Naive thymus-derived CD4-positive, alpha-beta T cell (primary cell): ENCODE measurements at regions of chr15 and their contacts with region 1.

Region 1: GRCh38 chr15:58309963-58310928 is 121.5 kb upstream of the LIPC start:
- DNase-seq: no peak
- ATAC-seq: no peak
- H3K4me3 ChIP-seq: no peak overlapping the region
- H3K4me3 Mint-ChIP-seq: peak overlapping the region in 1 of 10 donors; percentile 14
- H3K27ac ChIP-seq: no peak overlapping the region
- H3K27ac Mint-ChIP-seq: peak overlapping the region in 3 of 9 donors; percentile 38 to 63 (median 53)
- H3K4me1 ChIP-seq: peaks cover 12 to 20% of the 10 kb centered on the region in 2 donors
- H3K4me1 Mint-ChIP-seq: peaks cover 26 to 63% (median 39%) of the 10 kb centered on the region in 7 donors
- H3K27me3 ChIP-seq: no peaks in the 10 kb centered on the region
- H3K27me3 Mint-ChIP-seq: no peaks in the 10 kb centered on the region

Region 2: DNA sequence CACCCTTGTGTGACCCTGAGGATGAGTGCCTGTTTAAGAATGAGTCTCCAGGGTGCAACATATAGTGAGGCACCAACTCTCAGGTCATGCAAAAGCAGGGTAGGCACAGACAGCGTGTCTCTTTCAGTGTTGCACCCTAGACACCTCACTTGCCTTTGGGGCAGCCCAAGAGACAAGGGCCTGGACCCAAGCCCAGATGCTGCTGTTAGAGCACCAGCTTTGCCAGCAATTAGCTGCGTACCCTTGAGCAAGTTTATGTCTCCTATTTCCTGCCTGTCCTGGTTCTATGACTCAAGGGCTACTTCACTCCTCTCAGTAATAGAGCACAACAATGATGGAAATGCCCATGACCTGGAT is 49.4 kb before region 1 on chr15:
- CTCF ChIA-PET with region 1: no interaction called
- POLR2A ChIA-PET with region 1: no interaction called
- intact Hi-C with region 1: no loop called
- DNase-seq: no peak
- ATAC-seq: no peak
- H3K4me3 ChIP-seq: no peak overlapping the region
- H3K4me3 Mint-ChIP-seq: no peak overlapping the region
- H3K27ac ChIP-seq: no peak overlapping the region
- H3K27ac Mint-ChIP-seq: no peak overlapping the region
- H3K4me1 ChIP-seq: no peaks in the 10 kb centered on the region
- H3K4me1 Mint-ChIP-seq: peaks cover 0 to 13% (median 9%) of the 10 kb centered on the region in 7 donors
- H3K27me3 ChIP-seq: no peaks in the 10 kb centered on the region
- H3K27me3 Mint-ChIP-seq: peaks cover 0 to 8% (median 0%) of the 10 kb centered on the region in 5 donors

Region 3: GRCh38 chr15:58357521-58358476 is 47.6 kb after region 1 on chr15:
- CTCF ChIA-PET with region 1: interaction called, 3 read pairs
- POLR2A ChIA-PET with region 1: no interaction called
- intact Hi-C with region 1: loop called in 1 of 2 experiments (anchors 5 kb)
- DNase-seq: peak in 8 of 9 donors; percentile 41 to 82 (median 62)
- ATAC-seq: peak; percentile 87
- H3K4me3 ChIP-seq: no peak overlapping the region
- H3K4me3 Mint-ChIP-seq: peak overlapping the region; percentile 42 to 70 (median 56)
- H3K27ac ChIP-seq: peak overlapping the region; percentile 71
- H3K27ac Mint-ChIP-seq: peak overlapping the region; percentile 80 to 94 (median 87)
- H3K4me1 ChIP-seq: peaks cover 0 to 18% of the 10 kb centered on the region in 2 donors
- H3K4me1 Mint-ChIP-seq: peaks cover 12 to 38% (median 31%) of the 10 kb centered on the region in 7 donors
- H3K27me3 ChIP-seq: no peaks in the 10 kb centered on the region
- H3K27me3 Mint-ChIP-seq: no peaks in the 10 kb centered on the region

Region 4: GRCh38 chr15:58410353-58410752 is 100.1 kb after region 1 on chr15:
- CTCF ChIA-PET with region 1: no interaction called
- POLR2A ChIA-PET with region 1: no interaction called
- intact Hi-C with region 1: loop called in 1 of 2 experiments (anchors 10 kb)
- DNase-seq: peak in 7 of 9 donors; percentile 30 to 59 (median 47)
- ATAC-seq: peak; percentile 69
- H3K4me3 ChIP-seq: peak overlapping the region; percentile 29
- H3K4me3 Mint-ChIP-seq: peak overlapping the region; percentile 77 to 96 (median 89)
- H3K27ac ChIP-seq: peak overlapping the region; percentile 57
- H3K27ac Mint-ChIP-seq: peak overlapping the region; percentile 53 to 95 (median 92)
- H3K4me1 ChIP-seq: no peaks in the 10 kb centered on the region
- H3K4me1 Mint-ChIP-seq: peaks cover 6 to 39% (median 30%) of the 10 kb centered on the region in 7 donors
- H3K27me3 ChIP-seq: no peaks in the 10 kb centered on the region
- H3K27me3 Mint-ChIP-seq: no peaks in the 10 kb centered on the region